ENCODE measurements at regions of chr20 and their contacts with region 1.

Region 1: DNA sequence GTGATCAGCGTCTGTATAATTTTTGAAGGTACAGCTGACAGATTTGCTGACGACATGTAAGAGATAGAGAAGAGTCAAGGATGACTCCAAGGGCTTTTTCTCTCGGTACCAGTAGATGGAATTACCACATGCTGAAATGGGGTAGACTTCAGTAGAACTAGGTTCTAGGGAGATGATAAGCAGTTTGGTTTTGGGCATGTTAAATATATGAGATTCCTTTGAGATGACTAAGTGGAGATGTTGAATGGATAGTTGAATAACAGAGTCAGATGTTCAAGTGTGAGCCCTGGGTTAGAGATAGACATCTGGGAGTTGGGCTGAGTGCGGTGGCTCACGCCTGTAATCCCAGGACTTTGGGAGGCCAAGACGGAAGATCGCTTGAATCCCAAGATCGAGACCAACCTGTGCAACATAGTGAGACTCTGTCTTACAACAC is 50.0 kb downstream of the PHF20 start:
- DNase-seq: no peak
- ATAC-seq: peak in 1 of 2 donors; percentile 69

Region 2: GRCh38 chr20:35619196-35620095 is 202.4 kb before region 1 on chr20:
- intact Hi-C with region 1: no loop called
- DNase-seq: peak; percentile 88
- ATAC-seq: peak; percentile 21 to 52

Region 3: GRCh38 chr20:35871311-35871771 is 49.5 kb after region 1 on chr20:
- intact Hi-C with region 1: loop called in 1 of 2 experiments (anchors 5 kb)
- DNase-seq: peak; percentile 59
- ATAC-seq: peak in 1 of 2 donors; percentile 42

Measured in left cardiac atrium (tissue), 4 donors.